ENCODE measurements at regions of chr15 and their contacts with region 1.

Region 1: GRCh38 chr15:57146506-57147201 is 228.2 kb downstream of the TCF12 start:
- DNase-seq: no peak

Region 2: DNA sequence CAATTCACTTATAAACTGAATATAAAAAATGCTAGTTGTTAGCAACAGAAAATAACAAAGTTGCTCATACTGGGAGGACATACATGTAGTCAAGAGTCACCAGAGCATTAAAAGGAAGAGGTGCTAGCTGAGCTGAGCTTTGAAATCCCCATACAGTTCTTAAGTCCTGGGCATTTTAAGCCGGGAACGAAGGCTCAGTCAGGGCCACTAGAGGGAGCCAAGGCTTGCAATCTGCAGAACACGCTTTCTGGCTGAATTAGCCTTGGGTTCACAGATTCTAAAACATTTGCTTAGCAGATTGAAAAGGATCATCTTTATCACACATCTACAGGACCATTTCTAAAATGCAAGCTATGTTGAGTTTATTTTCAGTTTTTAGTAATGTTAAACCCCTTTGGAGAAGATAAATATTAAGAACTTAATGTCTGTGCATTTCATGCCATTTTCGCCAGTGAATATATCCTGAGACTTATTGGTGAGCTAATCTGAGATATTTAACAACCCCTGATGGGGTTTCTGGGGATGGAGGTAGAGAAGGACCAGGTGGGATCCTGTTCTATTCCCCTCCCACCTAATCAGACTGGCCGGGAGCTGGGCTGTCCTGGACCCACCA is 655.4 kb before region 1 on chr15:
- intact Hi-C with region 1: loop called (anchors 10 kb)
- DNase-seq: no peak

Region 3: GRCh38 chr15:57213862-57214261 is 67.2 kb after region 1 on chr15:
- intact Hi-C with region 1: loop called (anchors 5 kb)
- DNase-seq: no peak

Region 4: GRCh38 chr15:57273402-57273801 is 126.7 kb after region 1 on chr15:
- intact Hi-C with region 1: no loop called
- DNase-seq: no peak

Region 5: GRCh38 chr15:57306161-57306943 is 159.7 kb after region 1 on chr15:
- intact Hi-C with region 1: loop called (anchors 1 kb)
- DNase-seq: peak; percentile 94

Measured in cardiac septum (tissue), 1 donor.